ENCODE measurements at regions of chr7 and their contacts with region 1.

Region 1: GRCh38 chr7:34823640-34824258 is 165.7 kb downstream of the NPSR1 start:
- DNase-seq: peak; percentile 22
- ATAC-seq: peak; percentile 78
- H3K4me3 ChIP-seq: no peak overlapping the region
- H3K27ac ChIP-seq: no peak overlapping the region
- H3K4me1 ChIP-seq: no peaks in the 10 kb centered on the region
- H3K27me3 ChIP-seq: no peaks in the 10 kb centered on the region; a peak in 1 of 5 replicates
- CTCF ChIP-seq: peak; percentile 72
- EP300 ChIP-seq: no peak
- POLR2A ChIP-seq: no peak
- RAD21 ChIP-seq: peak; percentile 58

Region 2: GRCh38 chr7:34928049-34928448 is 104.3 kb after region 1 on chr7:
- CTCF ChIA-PET with region 1: interaction called, 3 read pairs
- POLR2A ChIA-PET with region 1: no interaction called
- in situ Hi-C with region 1: no loop called
- intact Hi-C with region 1: loop called (anchors 5 kb)
- DNase-seq: peak; percentile 46
- ATAC-seq: peak; percentile 91
- H3K4me3 ChIP-seq: no peak overlapping the region
- H3K27ac ChIP-seq: no peak overlapping the region
- H3K4me1 ChIP-seq: no peaks in the 10 kb centered on the region
- H3K27me3 ChIP-seq: no peaks in the 10 kb centered on the region
- CTCF ChIP-seq: peak; percentile 67
- EP300 ChIP-seq: no peak
- POLR2A ChIP-seq: no peak
- RAD21 ChIP-seq: no peak

Region 3: DNA sequence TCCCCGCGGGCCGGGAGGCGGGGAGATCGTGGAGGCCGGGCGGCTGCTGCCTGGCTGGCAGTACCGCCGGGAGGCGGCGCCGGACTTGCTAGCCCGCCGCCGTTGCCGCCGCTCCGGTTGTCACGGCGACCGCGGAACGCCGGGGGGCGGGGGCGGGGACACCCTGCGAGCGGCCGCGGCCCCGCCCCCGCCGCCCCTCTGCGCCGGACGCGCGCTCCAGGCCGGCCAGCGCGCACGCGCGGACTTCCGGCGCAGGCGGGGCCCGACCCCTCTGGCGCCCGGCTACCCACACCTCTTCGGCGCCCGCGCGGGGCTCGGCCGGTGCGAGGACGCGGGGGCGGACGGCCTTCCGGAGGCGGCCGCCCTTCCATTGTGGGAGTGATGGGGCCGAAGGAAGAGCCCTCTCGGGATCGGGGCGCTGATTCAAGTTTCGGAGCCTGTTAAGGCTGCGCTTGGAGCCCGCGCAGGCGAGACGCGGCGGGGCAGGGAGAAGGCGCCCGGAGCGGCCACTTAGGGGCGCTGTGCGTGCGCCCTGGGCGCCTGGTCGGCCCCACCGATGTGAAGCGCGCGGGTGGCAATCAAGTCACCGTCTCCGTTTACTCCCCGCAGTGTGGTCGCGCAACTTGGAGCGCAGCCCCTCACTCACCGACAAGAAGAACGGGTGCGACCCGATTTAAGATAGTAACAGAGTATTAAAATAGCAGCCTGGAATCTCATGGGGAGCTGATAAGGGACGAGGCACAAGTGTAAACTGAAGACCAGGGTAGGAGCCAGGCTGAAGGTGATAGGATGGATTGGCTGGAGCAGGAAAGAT is 214.0 kb after region 1 on chr7:
- CTCF ChIA-PET with region 1: interaction called, 3 read pairs
- POLR2A ChIA-PET with region 1: no interaction called
- in situ Hi-C with region 1: loop called (anchors 5 kb)
- intact Hi-C with region 1: loop called (anchors 2 kb)
- DNase-seq: peak; percentile 79
- ATAC-seq: peak; percentile 83
- H3K4me3 ChIP-seq: peak overlapping the region; percentile 79 to 84 (median 82)
- H3K27ac ChIP-seq: peak overlapping the region; percentile 74
- H3K4me1 ChIP-seq: peaks cover 40% of the 10 kb centered on the region
- H3K27me3 ChIP-seq: peaks cover 0 to 4% of the 10 kb centered on the region in 2 experiments; a peak in 1 of 5 replicates
- CTCF ChIP-seq: peak; percentile 89
- EP300 ChIP-seq: no peak
- POLR2A ChIP-seq: peak; percentile 27 to 66; a peak in 3 of 4 replicates
- RAD21 ChIP-seq: peak; percentile 75